ENCODE measurements at regions of chr17 and their contacts with region 1.

Region 1: GRCh38 chr17:6640536-6641373 is at the starts of genes KIAA0753 and TXNDC17:
- DNase-seq: peak; percentile 96
- H3K4me3 Mint-ChIP-seq: peak within 1 kb of the TSS; percentile 90
- H3K27ac Mint-ChIP-seq: peak within 1 kb of the TSS; percentile 95
- H3K4me1 Mint-ChIP-seq: peaks cover 59% of the 10 kb centered on the region
- H3K27me3 Mint-ChIP-seq: no peaks in the 10 kb centered on the region
- total RNA-seq, gene KIAA0753: 14.2 to 14.7 TPM
- total RNA-seq, gene TXNDC17: 107 to 123 TPM

Region 2: GRCh38 chr17:6443692-6444569 is 196.8 kb before region 1 on chr17 and contains the start of gene PIMREG:
- CTCF ChIA-PET with region 1: no interaction called
- POLR2A ChIA-PET with region 1: no interaction called
- intact Hi-C with region 1: loop called (anchors 5 kb)
- DNase-seq: peak; percentile 97
- H3K4me3 Mint-ChIP-seq: peak within 1 kb of the TSS; percentile 95
- H3K27ac Mint-ChIP-seq: peak within 1 kb of the TSS; percentile 86
- H3K4me1 Mint-ChIP-seq: peaks cover 12% of the 10 kb centered on the region
- H3K27me3 Mint-ChIP-seq: peaks cover 4% of the 10 kb centered on the region
- total RNA-seq, gene PIMREG: 16.7 to 16.9 TPM

Region 3: DNA sequence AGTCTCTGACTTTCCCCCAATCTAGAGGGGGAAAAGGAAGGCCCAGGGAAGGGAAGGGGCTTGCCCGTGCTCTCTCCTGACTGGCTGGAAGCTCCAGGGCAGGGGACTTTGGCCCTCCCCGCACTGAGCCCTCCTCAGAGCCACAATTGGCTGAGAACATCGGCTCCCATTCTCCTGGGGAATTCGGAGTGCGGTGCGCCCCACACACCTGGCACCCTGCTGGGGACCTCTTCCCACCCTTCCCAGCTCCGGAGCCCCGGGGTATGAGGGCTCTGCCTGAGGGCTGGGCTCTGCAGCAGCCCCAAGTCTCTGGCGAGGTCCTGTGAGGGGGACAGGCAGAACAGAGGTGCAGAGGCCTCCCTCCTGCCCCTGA is 160.5 kb before region 1 on chr17:
- CTCF ChIA-PET with region 1: no interaction called
- POLR2A ChIA-PET with region 1: no interaction called
- intact Hi-C with region 1: no loop called
- DNase-seq: no peak
- H3K4me3 Mint-ChIP-seq: no peak overlapping the region
- H3K27ac Mint-ChIP-seq: no peak overlapping the region
- H3K4me1 Mint-ChIP-seq: no peaks in the 10 kb centered on the region
- H3K27me3 Mint-ChIP-seq: peaks cover 6% of the 10 kb centered on the region

Region 4: DNA sequence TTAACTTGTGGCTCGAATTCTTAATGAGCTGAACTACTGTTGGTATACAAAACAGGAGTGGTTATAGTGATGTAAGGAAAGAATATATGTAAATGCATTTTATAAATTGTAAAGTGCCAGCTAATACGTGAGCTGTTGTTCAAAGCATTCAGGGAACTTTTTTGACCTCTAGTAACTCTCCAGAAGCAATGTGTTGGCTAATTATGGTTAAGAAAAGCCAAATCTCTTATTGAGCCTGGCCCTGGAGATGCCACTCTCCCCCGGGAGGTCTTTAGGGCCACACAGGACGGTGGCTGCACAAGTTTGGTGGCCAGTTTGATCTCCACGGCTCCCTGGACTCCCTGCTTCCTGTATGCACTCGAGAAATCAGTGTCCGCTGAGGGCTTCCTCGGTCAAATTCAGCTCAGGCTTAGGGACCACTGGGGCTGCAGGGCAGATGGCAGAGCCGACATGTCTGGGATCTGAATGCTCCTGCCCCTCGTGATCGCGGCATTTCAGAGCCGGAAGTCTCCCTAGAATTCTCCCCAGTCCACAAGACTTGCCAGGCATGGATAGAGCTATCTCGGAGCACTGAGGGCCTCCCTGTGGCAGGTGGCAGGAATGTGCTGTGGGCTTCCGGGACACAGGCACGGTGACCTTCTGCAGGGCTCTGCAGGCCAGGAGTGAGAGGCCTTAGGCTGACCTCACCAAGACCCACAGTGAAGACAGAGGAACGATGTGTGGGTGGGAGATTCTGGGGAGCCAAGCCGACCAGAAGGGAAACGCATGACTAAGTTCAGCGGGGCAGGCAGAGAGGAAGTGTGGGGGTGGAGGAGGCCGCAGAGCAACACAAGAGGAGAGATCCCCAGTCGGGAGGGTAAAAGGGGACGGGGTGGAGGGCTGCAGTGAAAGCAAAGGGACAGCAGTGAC is 65.8 kb before region 1 on chr17:
- CTCF ChIA-PET with region 1: no interaction called
- POLR2A ChIA-PET with region 1: no interaction called
- intact Hi-C with region 1: loop called (anchors 5 kb)
- DNase-seq: peak; percentile 75
- H3K4me3 Mint-ChIP-seq: no peak overlapping the region
- H3K27ac Mint-ChIP-seq: peak overlapping the region; percentile 7
- H3K4me1 Mint-ChIP-seq: peaks cover 15% of the 10 kb centered on the region
- H3K27me3 Mint-ChIP-seq: no peaks in the 10 kb centered on the region

Region 5: DNA sequence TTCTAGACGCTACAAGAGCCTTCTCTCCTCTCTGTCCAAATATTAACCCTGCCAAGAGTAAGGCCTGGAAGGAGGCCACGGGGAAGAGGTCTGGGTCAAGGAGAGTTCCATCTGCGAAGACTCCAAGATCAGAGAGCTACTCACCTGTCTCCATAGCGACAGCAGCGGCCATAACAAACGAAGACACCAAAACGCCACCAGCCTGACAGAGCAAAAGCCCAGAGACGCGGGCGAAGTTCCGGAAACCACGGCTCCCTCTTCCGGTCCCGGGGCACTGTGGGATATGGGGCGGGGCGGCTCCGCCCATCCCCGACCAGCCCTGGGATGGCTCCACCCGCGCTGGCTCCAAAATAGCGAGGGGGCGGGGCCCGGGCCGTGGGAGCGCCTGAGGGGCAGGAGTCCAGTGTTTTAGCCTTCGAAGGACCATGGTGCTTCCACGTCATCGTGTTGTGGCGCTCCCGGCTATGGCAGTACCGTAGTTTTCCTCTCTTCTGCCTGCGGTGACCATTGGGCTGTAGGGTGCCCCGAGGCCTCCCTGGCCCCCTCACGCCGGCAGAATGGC is 10.7 kb after region 1 on chr17 and contains the starts of genes C17orf100 and MED31:
- CTCF ChIA-PET with region 1: interaction called, 10 read pairs
- POLR2A ChIA-PET with region 1: interaction called, 28 read pairs
- intact Hi-C with region 1: loop called (anchors 1 kb)
- DNase-seq: peak; percentile 97
- H3K4me3 Mint-ChIP-seq: peak within 1 kb of the TSS; percentile 99
- H3K27ac Mint-ChIP-seq: peak within 1 kb of the TSS; percentile 97
- H3K4me1 Mint-ChIP-seq: peaks cover 60% of the 10 kb centered on the region
- H3K27me3 Mint-ChIP-seq: no peaks in the 10 kb centered on the region
- total RNA-seq, gene C17orf100: 1.5 to 1.8 TPM
- total RNA-seq, gene MED31: 22.6 to 25.9 TPM